ENCODE measurements at regions of chr6 and their contacts with region 1.

Region 1: DNA sequence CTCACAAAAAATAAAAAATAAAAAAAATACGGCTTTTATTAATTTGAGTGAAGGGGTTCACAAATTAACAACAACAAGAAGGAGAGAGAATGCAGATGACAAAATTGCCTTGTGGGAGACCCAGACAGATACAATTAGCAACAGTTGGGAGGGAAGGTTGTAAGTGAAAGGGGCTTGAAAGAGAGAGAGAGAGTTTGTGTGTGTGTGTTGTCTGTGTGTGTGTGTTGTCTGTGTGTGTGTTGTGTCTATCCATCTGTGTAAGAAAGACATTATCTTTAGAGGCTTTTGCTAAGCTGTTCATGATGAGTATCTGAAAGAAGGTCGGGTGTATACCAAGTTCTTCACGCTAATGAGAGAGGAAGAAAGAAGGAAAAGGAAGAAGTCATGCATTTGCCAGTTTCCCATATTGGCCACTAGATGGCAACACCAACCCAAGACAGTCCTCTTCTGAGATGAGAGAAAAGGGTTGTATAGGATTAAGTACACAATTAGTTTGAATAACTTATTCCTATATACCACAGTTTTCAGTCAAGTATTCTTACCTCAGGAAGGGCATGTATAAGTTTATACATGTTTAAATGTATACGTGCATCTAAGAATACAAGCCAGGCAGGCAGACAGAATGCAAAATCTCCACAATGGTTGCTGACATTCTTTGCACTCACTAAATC is 63.7 kb upstream of the CD2AP start:
- DNase-seq: peak; percentile 46
- ATAC-seq: peak; percentile 85
- H3K4me3 Mint-ChIP-seq: peak overlapping the region; percentile 69
- H3K27ac Mint-ChIP-seq: peak overlapping the region; percentile 69
- H3K4me1 Mint-ChIP-seq: peaks cover 15% of the 10 kb centered on the region
- H3K27me3 Mint-ChIP-seq: no peaks in the 10 kb centered on the region
- CTCF ChIP-seq: peak; percentile 79

Region 2: DNA sequence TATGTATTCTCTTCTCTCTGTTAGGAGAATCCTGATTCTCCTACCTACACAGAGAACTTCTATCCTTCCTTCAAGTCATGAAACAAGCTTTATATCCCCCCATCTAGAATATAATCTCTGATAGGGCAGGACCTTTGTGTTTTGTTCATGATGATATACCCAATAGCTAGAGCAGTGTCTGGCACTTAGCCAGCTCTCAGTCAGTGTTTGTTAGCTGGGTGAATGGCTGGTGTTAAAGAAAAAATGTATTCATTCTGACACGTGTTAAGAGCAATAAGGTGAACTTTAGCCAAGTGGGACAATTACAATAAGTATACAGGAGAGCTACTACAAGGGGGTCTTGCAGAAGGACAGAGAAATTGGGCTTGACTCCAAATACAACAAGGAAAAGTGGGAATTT is 69.9 kb before region 1 on chr6:
- CTCF ChIA-PET with region 1: no interaction called
- POLR2A ChIA-PET with region 1: no interaction called
- intact Hi-C with region 1: no loop called
- DNase-seq: no peak
- ATAC-seq: no peak
- H3K4me3 Mint-ChIP-seq: no peak overlapping the region
- H3K27ac Mint-ChIP-seq: no peak overlapping the region
- H3K4me1 Mint-ChIP-seq: no peaks in the 10 kb centered on the region
- H3K27me3 Mint-ChIP-seq: peaks cover 10% of the 10 kb centered on the region
- CTCF ChIP-seq: no peak

Region 3: DNA sequence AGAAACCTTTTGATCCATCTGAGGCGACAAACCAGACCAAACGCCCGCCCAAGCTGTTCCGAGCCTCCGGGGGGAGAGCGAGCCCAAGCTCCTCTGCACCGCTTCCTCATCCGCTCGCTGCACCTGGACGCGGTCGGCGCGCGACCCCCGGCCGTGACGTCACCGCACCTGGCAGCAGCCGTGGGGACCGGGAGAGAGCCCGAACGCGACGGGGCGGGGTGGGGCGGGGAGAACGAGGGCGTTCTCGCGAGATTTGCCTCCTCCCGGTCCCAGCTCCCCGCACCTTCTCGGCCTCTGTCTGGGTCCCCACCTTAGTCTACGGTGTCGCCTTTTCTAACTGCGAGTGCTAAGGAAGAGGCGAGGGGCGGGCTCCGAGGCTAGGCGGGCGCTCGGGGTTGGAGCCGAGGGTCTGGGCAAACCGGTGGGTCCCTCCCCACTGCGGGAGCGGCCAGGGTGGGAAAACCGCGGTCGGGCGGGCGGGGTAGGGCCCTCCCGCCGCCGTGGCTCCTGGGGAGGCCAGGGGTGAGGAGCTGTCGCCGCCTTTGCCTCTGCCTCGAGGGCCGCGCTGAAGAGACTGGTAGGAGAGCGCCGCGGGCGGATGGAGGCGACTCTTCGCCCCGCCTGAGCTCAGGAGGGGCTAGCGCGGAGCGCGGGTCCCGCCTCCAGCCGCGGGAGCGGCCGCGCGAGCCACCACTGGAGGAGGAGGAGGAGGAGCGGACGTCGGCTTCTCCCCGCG is 63.8 kb after region 1 on chr6 and contains the start of gene CD2AP:
- CTCF ChIA-PET with region 1: interaction called, 6 read pairs
- POLR2A ChIA-PET with region 1: interaction called, 12 read pairs
- intact Hi-C with region 1: no loop called
- DNase-seq: peak; percentile 92
- ATAC-seq: peak; percentile 89
- H3K4me3 Mint-ChIP-seq: peak within 1 kb of the TSS; percentile 100
- H3K27ac Mint-ChIP-seq: peak within 1 kb of the TSS; percentile 99
- H3K4me1 Mint-ChIP-seq: peaks cover 28% of the 10 kb centered on the region
- H3K27me3 Mint-ChIP-seq: no peaks in the 10 kb centered on the region
- CTCF ChIP-seq: no peak
- total RNA-seq, gene CD2AP: 28.3 to 29.2 TPM

Region 4: DNA sequence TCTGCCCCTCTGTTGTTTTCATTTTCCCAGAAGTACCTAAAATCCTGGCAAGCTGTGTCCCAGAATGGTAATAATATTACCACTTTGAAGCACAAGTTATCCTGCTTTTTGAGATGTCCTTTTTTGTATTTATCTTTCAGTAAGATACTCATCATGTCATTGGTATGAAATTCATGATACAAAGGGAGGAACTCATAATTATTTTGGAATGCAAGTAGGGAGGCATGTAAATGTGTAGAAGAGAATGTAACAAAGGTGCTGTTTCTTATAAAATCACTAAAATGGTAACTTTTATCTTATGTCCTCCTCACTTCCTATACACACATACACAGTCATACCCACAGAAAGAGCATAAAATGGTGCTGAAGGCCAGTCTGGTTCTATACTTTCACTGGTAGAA is 173.6 kb after region 1 on chr6:
- CTCF ChIA-PET with region 1: interaction called, 10 read pairs
- POLR2A ChIA-PET with region 1: no interaction called
- intact Hi-C with region 1: no loop called
- DNase-seq: no peak
- ATAC-seq: no peak
- H3K4me3 Mint-ChIP-seq: no peak overlapping the region
- H3K27ac Mint-ChIP-seq: no peak overlapping the region
- H3K4me1 Mint-ChIP-seq: no peaks in the 10 kb centered on the region
- H3K27me3 Mint-ChIP-seq: no peaks in the 10 kb centered on the region
- CTCF ChIP-seq: no peak

Region 5: GRCh38 chr6:47733879-47734558 is 320.1 kb after region 1 on chr6:
- CTCF ChIA-PET with region 1: interaction called, 12 read pairs
- POLR2A ChIA-PET with region 1: no interaction called
- intact Hi-C with region 1: no loop called
- DNase-seq: no peak
- ATAC-seq: no peak
- H3K4me3 Mint-ChIP-seq: no peak overlapping the region
- H3K27ac Mint-ChIP-seq: no peak overlapping the region
- H3K4me1 Mint-ChIP-seq: peaks cover 4% of the 10 kb centered on the region
- H3K27me3 Mint-ChIP-seq: peaks cover 5% of the 10 kb centered on the region
- CTCF ChIP-seq: peak; percentile 41

Region 6: DNA sequence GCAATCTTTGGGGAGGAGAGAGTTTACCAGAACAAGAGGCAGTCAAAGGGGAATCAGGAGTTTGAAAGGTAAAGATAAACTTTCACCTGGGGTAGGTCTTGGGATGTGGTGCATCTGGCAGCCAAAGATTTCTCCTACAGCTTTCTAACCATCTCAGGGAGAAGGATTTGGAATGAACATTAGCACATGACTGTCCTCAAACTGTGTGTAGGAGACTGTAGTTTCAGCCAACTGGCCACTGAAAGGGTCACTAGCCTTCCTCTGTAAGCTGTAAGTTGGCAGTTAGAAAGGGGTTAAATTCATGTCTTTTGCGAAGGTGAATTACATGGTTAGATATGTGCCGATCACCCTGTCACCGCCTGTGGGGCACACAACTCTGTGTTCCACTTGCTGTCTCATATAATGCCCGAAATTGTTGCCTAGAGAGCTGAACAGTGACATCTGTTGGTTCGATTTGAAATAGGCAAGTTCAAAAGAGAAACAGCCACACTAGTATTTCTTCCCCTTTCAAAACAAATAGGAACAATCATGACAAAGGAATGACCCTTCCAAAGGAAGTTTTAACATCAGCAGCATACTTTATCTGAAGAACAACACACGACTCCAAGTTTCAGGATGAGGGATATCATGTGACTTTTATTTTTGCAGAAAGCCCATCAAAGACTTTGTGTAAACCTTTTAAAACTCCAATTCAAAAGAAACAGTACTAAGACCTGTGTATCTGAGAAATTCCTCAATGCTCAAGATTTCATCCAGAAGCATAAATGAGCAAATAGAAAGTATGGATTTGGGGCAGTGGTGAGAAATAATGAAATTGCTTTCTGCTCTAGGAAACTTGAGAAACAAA is 366.8 kb after region 1 on chr6:
- CTCF ChIA-PET with region 1: interaction called, 33 read pairs
- POLR2A ChIA-PET with region 1: no interaction called
- intact Hi-C with region 1: loop called (anchors 1 kb)
- DNase-seq: peak; percentile 56
- ATAC-seq: peak; percentile 97
- H3K4me3 Mint-ChIP-seq: no peak overlapping the region
- H3K27ac Mint-ChIP-seq: no peak overlapping the region
- H3K4me1 Mint-ChIP-seq: peaks cover 5% of the 10 kb centered on the region
- H3K27me3 Mint-ChIP-seq: peaks cover 11% of the 10 kb centered on the region
- CTCF ChIP-seq: peak; percentile 56